Dendritic cell treated with granulocyte-macrophage colony-stimulating factor and Interleukin-4, amounts not matched to agents 40 ng/mL and 50 ng/mL, for 4 days (primary cell): ENCODE measurements at regions of chr11 and their contacts with region 1.

Region 1: GRCh38 chr11:17384002-17384511 is 4.4 kb downstream of the KCNJ11 start:
- H3K4me3 Mint-ChIP-seq: no peak overlapping the region
- H3K27ac Mint-ChIP-seq: no peak overlapping the region
- H3K4me1 Mint-ChIP-seq: peaks cover 56% of the 10 kb centered on the region
- H3K27me3 Mint-ChIP-seq: peaks cover 24% of the 10 kb centered on the region

Region 2: GRCh38 chr11:17026487-17027082 is 357.5 kb before region 1 on chr11:
- intact Hi-C with region 1: no loop called
- H3K4me3 Mint-ChIP-seq: no peak overlapping the region
- H3K27ac Mint-ChIP-seq: no peak overlapping the region
- H3K4me1 Mint-ChIP-seq: no peaks in the 10 kb centered on the region
- H3K27me3 Mint-ChIP-seq: peaks cover 4% of the 10 kb centered on the region

Region 3: GRCh38 chr11:17343907-17344306 is 40.1 kb before region 1 on chr11:
- intact Hi-C with region 1: no loop called
- H3K4me3 Mint-ChIP-seq: no peak overlapping the region
- H3K27ac Mint-ChIP-seq: no peak overlapping the region
- H3K4me1 Mint-ChIP-seq: no peaks in the 10 kb centered on the region
- H3K27me3 Mint-ChIP-seq: no peaks in the 10 kb centered on the region

Region 4: GRCh38 chr11:17354601-17354991 is 29.5 kb before region 1 on chr11:
- intact Hi-C with region 1: no loop called
- H3K4me3 Mint-ChIP-seq: no peak overlapping the region
- H3K27ac Mint-ChIP-seq: no peak overlapping the region
- H3K4me1 Mint-ChIP-seq: peaks cover 28% of the 10 kb centered on the region
- H3K27me3 Mint-ChIP-seq: peaks cover 1% of the 10 kb centered on the region

Region 5: DNA sequence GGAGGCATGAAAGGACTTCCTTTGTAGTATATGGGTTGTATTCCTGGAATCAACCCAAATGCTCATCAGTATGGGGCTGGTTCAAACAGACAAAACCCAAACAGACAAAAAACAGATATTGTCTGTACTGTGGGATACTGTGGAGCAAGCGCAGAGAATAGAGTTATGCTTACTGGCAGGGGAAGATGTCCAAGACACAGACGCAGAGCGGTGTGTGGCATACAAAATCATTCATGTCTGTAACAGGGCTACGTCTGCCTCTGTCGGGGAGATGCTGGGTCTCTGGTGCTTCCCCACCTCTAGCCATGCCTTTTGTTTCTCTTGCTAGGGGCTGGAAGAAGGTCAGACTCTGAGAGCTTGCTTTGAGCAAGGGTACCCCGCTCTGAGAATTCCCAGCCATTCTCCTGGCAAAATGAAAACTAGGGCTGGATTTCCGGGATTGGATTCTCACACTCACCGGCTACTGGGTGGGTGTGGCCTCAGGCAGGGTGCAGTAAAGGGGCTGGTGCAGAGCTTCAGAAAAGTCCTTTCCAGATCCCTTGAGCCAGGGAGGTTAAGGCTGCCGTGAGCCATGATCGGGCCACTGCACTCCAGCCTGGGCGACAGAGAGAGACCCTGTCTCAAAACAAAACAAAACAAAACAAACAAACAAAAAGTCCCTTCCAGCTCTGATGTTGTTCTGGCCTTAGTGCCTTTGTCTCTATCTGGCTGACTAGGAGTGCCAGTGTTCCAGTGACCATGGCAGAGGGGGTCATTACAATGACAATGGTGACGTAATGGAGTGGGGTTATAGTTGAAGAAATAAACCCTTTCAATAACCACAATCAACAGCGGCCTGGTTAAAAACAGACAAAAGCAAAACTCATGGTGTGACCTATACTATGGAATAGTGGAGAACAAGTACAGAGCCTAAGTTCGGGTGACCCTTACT is 95.5 kb after region 1 on chr11:
- intact Hi-C with region 1: no loop called
- H3K4me3 Mint-ChIP-seq: no peak overlapping the region
- H3K27ac Mint-ChIP-seq: no peak overlapping the region
- H3K4me1 Mint-ChIP-seq: peaks cover 7% of the 10 kb centered on the region
- H3K27me3 Mint-ChIP-seq: peaks cover 51% of the 10 kb centered on the region

Region 6: GRCh38 chr11:17528181-17528691 is 144.2 kb after region 1 on chr11:
- intact Hi-C with region 1: loop called (anchors 5 kb)
- H3K4me3 Mint-ChIP-seq: no peak overlapping the region
- H3K27ac Mint-ChIP-seq: no peak overlapping the region
- H3K4me1 Mint-ChIP-seq: no peaks in the 10 kb centered on the region
- H3K27me3 Mint-ChIP-seq: peaks cover 2% of the 10 kb centered on the region